ENCODE measurements at regions of chr15 and their contacts with region 1.

Region 1: GRCh38 chr15:67521029-67521811 is at the start of gene C15orf61:
- DNase-seq: peak; percentile 90
- ATAC-seq: peak; percentile 79
- H3K4me3 Mint-ChIP-seq: peak within 1 kb of the TSS; percentile 96
- H3K27ac Mint-ChIP-seq: peak within 1 kb of the TSS; percentile 98
- H3K4me1 Mint-ChIP-seq: peaks cover 21% of the 10 kb centered on the region
- H3K27me3 Mint-ChIP-seq: no peaks in the 10 kb centered on the region
- total RNA-seq, gene C15orf61: 3.4 to 5.0 TPM

Region 2: DNA sequence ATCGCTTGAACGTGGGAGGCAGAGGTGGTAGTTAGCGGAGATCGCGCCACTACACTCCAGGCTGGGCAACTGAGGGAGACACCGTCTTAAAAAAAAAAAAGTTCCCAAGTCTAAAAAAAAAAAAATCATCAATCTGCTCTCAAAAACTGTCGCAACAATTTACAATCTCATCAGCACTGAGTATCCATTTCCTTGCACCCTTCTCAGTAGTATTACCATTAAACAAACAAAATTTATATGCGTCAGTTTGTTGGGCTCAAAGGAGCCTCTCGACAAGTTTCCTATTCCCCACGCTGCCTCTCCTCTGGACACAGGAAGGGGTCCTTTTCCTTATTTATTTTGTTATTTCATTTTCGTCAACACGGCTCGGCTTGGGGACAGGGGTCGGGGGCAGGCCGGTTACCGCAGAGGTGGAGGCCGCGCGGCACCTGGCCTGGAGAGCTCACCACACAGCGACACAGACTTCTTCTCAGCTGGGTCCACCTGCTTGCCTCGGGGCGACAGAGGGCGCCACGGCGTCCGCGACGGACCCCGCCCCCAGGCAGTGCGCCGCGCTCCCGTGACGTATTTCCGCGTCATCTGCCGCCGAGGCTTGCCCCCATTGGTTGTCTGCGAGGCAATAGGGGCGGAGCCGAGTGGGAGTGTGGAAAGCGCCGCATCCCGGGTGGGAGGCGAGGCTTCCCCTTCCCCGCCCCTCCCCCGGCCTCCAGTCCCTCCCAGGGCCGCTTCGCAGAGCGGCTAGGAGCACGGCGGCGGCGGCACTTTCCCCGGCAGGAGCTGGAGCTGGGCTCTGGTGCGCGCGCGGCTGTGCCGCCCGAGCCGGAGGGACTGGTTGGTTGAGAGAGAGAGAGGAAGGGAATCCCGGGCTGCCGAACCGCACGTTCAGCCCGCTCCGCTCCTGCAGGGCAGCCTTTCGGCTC is 1134.8 kb before region 1 on chr15 and contains the start of gene MAP2K1:
- CTCF ChIA-PET with region 1: no interaction called
- POLR2A ChIA-PET with region 1: no interaction called
- intact Hi-C with region 1: loop called in 1 of 2 experiments (anchors 5 kb)
- DNase-seq: peak; percentile 99
- ATAC-seq: peak; percentile 84
- H3K4me3 Mint-ChIP-seq: peak within 1 kb of the TSS; percentile 95
- H3K27ac Mint-ChIP-seq: peak within 1 kb of the TSS; percentile 100
- H3K4me1 Mint-ChIP-seq: peaks cover 44% of the 10 kb centered on the region
- H3K27me3 Mint-ChIP-seq: no peaks in the 10 kb centered on the region
- total RNA-seq, gene MAP2K1: 94.9 to 115 TPM

Region 3: DNA sequence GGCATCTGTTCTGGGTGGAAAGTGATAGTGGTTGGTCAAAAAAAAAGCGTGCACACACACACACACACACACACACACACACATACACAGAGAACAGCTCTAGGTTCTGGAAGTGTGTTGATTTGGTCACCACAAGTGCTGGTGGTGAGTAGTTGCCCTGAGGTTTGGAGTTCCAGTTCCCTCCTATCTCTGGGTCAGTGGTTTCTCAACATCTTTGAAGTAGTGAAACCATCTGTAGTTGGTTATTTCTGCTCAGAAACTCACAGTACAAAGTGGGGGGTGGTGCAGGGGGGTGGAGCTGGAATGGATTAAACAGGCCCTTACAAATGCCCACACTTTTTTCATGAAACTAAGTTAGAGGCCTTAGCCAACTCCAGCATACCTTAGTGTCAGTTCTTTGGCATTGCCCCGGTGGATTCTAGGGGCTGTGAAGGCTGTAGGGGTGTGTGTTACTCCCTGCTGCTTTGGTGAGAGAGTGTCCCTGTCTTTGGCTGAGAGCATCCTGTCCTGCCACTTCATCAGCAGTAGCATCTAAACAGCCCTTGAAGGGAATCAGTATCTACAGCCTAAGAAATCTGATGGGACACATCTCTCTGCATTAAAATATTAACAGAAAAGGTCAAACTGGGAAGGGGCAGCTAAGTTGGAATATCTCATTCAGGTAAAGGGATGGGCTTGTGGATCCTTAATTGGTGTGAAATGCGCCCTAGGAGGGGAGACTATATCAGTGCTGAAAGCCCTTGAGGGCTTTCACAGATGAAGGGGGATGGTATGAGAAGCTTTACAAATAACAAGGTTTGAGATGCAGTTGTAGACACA is 435.2 kb before region 1 on chr15:
- CTCF ChIA-PET with region 1: no interaction called
- POLR2A ChIA-PET with region 1: no interaction called
- intact Hi-C with region 1: no loop called
- DNase-seq: peak; percentile 53
- ATAC-seq: peak; percentile 40
- H3K4me3 Mint-ChIP-seq: peak overlapping the region; percentile 52
- H3K27ac Mint-ChIP-seq: peak overlapping the region; percentile 82
- H3K4me1 Mint-ChIP-seq: peaks cover 97% of the 10 kb centered on the region
- H3K27me3 Mint-ChIP-seq: no peaks in the 10 kb centered on the region

Region 4: GRCh38 chr15:67531379-67532059 is 10.3 kb after region 1 on chr15:
- CTCF ChIA-PET with region 1: interaction called, 5 read pairs
- POLR2A ChIA-PET with region 1: interaction called, 7 read pairs
- intact Hi-C with region 1: loop called in 1 of 2 experiments (anchors 1 kb)
- DNase-seq: no peak
- ATAC-seq: peak; percentile 91
- H3K4me3 Mint-ChIP-seq: no peak overlapping the region
- H3K27ac Mint-ChIP-seq: no peak overlapping the region
- H3K4me1 Mint-ChIP-seq: peaks cover 16% of the 10 kb centered on the region
- H3K27me3 Mint-ChIP-seq: no peaks in the 10 kb centered on the region

Region 5: GRCh38 chr15:67762610-67763368 is 241.6 kb after region 1 on chr15:
- CTCF ChIA-PET with region 1: no interaction called
- POLR2A ChIA-PET with region 1: no interaction called
- intact Hi-C with region 1: loop called in 1 of 2 experiments (anchors 5 kb)
- DNase-seq: peak; percentile 81
- ATAC-seq: peak; percentile 99
- H3K4me3 Mint-ChIP-seq: no peak overlapping the region
- H3K27ac Mint-ChIP-seq: peak overlapping the region; percentile 79
- H3K4me1 Mint-ChIP-seq: peaks cover 76% of the 10 kb centered on the region
- H3K27me3 Mint-ChIP-seq: no peaks in the 10 kb centered on the region

Region 6: GRCh38 chr15:68277603-68278344 is 756.6 kb after region 1 on chr15 and contains the start of gene FEM1B:
- CTCF ChIA-PET with region 1: no interaction called
- POLR2A ChIA-PET with region 1: no interaction called
- intact Hi-C with region 1: loop called in 1 of 2 experiments (anchors 2 kb)
- DNase-seq: peak; percentile 94
- ATAC-seq: peak; percentile 79
- H3K4me3 Mint-ChIP-seq: peak within 1 kb of the TSS; percentile 99
- H3K27ac Mint-ChIP-seq: peak within 1 kb of the TSS; percentile 99
- H3K4me1 Mint-ChIP-seq: peaks cover 43% of the 10 kb centered on the region
- H3K27me3 Mint-ChIP-seq: no peaks in the 10 kb centered on the region
- total RNA-seq, gene FEM1B: 41.1 to 50.0 TPM

Measured in activated CD4-positive, alpha-beta T cell treated with anti-CD3 and anti-CD28 coated beads for 36 hours (primary cell).